ENCODE measurements at regions of chr18 and their contacts with region 1.

Region 1: GRCh38 chr18:3129053-3129864 is 90.5 kb downstream of the MYOM1 start:
- DNase-seq: peak; percentile 92
- ATAC-seq: peak; percentile 99
- H3K4me3 Mint-ChIP-seq: no peak overlapping the region
- H3K27ac Mint-ChIP-seq: peak overlapping the region; percentile 14
- H3K4me1 Mint-ChIP-seq: peaks cover 9% of the 10 kb centered on the region
- H3K27me3 Mint-ChIP-seq: no peaks in the 10 kb centered on the region
- CTCF ChIP-seq: peak; percentile 76

Region 2: DNA sequence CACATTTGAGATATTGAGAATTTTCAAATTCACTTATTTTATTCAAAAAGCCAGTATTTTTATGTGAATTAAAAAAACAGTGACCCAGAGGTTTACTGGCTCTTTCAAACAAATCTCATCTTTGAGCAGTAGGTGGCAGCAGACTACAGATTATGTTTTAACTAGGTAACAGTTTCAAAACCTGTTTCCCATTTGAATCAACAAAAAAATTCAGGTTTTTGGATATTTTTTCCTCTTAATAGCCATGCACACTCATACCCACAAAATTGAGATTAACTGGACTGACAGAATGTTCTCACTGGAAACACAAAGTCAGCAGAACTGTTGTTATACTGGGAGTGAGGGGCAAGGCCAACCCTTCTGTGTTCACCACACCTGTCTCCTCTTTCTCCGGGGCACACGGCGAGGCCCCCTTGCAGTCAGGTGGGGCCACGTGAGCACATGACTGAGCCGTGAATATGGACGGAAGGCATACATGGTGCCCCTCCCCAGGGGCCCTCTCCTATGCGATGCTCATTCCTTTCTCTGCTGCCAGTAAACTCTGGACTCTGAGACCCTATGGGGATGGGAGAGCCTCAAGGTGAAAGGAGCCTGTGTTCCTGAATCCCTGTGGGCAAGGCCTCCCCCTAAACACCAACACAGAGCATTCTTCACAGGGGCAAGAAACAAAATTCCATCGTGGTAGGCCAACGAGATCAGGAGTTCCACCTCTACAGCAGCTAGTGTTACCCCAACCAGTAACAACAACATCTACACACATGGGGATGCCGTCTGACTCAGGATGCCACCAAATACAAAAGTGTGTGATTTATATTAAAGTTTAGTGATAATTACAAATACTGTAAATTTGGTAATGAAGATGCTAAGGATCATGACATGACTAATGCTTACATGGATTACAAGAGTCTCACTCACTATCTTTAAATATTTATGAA is 196.7 kb before region 1 on chr18:
- CTCF ChIA-PET with region 1: interaction called, 17 read pairs
- POLR2A ChIA-PET with region 1: no interaction called
- intact Hi-C with region 1: no loop called
- DNase-seq: peak; percentile 56
- ATAC-seq: peak; percentile 71
- H3K4me3 Mint-ChIP-seq: no peak overlapping the region
- H3K27ac Mint-ChIP-seq: peak overlapping the region; percentile 79
- H3K4me1 Mint-ChIP-seq: peaks cover 43% of the 10 kb centered on the region
- H3K27me3 Mint-ChIP-seq: no peaks in the 10 kb centered on the region
- CTCF ChIP-seq: peak; percentile 88

Region 3: GRCh38 chr18:2985628-2986027 is 143.6 kb before region 1 on chr18:
- CTCF ChIA-PET with region 1: interaction called, 39 read pairs
- POLR2A ChIA-PET with region 1: no interaction called
- intact Hi-C with region 1: loop called (anchors 5 kb)
- DNase-seq: peak; percentile 32
- ATAC-seq: peak; percentile 53
- H3K4me3 Mint-ChIP-seq: no peak overlapping the region
- H3K27ac Mint-ChIP-seq: peak overlapping the region; percentile 34
- H3K4me1 Mint-ChIP-seq: peaks cover 72% of the 10 kb centered on the region
- H3K27me3 Mint-ChIP-seq: no peaks in the 10 kb centered on the region
- CTCF ChIP-seq: peak; percentile 74

Region 4: DNA sequence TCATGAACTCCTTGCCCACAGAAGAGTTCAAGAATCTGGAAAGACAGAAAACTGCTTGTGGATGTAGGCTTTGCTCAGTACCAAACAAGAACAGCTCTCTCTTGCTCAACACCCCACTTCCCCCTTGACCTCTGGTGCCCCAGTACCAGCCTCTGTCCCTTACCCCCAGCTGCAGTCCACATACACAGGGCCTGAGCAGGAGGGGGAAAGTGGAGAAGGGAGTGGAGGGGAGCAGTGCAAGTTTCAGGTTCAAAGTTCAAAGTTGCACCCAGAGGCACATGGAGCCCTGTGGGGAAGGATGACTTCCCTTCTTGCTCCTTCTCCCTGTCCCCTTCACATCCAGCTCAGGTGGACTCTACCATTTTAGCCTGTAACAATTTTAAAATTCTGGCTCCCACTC is 55.2 kb before region 1 on chr18:
- CTCF ChIA-PET with region 1: interaction called, 17 read pairs
- POLR2A ChIA-PET with region 1: no interaction called
- intact Hi-C with region 1: no loop called
- DNase-seq: no peak
- ATAC-seq: no peak
- H3K4me3 Mint-ChIP-seq: no peak overlapping the region
- H3K27ac Mint-ChIP-seq: no peak overlapping the region
- H3K4me1 Mint-ChIP-seq: peaks cover 21% of the 10 kb centered on the region
- H3K27me3 Mint-ChIP-seq: no peaks in the 10 kb centered on the region
- CTCF ChIP-seq: no peak

Region 5: DNA sequence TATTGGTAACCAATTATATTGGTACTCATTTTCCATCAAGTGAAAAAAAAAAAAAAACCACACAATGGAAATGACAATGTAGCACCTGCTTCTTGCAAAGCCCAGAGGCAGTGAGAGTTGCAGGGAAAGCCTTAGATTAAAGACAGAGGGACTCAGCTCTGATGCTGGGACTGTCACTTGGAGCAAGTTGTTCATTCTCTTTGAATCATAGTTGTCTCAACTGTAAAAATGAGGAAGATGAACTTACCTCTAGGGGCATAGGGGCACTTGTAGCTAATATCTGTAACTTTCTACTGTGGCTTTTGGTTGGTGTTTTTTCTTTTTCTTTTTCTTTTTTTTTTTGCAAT is 34.9 kb before region 1 on chr18:
- CTCF ChIA-PET with region 1: interaction called, 16 read pairs
- POLR2A ChIA-PET with region 1: no interaction called
- intact Hi-C with region 1: no loop called
- DNase-seq: no peak
- ATAC-seq: no peak
- H3K4me3 Mint-ChIP-seq: no peak overlapping the region
- H3K27ac Mint-ChIP-seq: no peak overlapping the region
- H3K4me1 Mint-ChIP-seq: peaks cover 21% of the 10 kb centered on the region
- H3K27me3 Mint-ChIP-seq: no peaks in the 10 kb centered on the region
- CTCF ChIP-seq: no peak

Region 6: GRCh38 chr18:3140986-3141639 is 11.9 kb after region 1 on chr18:
- CTCF ChIA-PET with region 1: interaction called, 47 read pairs
- POLR2A ChIA-PET with region 1: interaction called, 3 read pairs
- intact Hi-C with region 1: no loop called
- DNase-seq: no peak
- ATAC-seq: no peak
- H3K4me3 Mint-ChIP-seq: no peak overlapping the region
- H3K27ac Mint-ChIP-seq: no peak overlapping the region
- H3K4me1 Mint-ChIP-seq: no peaks in the 10 kb centered on the region
- H3K27me3 Mint-ChIP-seq: no peaks in the 10 kb centered on the region
- CTCF ChIP-seq: no peak

Region 7: DNA sequence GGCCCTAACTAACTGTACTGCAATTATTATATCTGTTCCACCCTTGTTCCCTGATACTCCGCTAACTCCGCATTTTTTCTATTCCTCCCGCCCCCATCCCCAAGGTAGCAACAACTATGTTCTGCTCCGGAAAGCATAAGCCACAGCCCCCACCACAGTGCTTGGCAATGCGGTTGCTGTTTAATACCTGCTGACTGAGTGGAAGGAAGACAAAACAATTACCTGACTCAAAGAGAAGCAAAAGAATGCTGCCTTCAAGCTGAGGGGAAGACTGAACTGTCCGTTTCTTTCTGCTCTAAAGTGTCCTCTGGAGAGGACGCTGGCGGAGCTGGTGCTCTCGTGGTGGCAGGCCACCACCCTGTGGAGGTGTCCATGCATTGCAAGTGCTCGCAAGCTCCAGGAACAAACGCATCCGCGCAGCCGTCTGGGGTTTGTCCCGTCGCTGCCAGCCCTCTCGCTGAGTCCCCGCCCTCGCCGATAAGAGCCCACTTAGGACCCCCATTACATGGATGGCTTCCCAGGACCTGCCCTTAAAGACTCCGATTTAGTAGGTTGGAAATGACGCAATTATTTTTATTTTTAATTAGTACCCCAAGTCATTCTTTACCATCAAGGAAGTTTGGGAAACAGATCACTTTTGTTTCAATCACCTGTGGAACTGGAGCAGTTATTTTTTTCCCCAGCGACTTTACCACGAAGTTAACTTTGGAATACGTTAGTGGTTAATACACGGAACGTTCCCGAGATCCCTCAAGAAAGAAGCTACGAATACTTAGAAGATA is 116.8 kb after region 1 on chr18:
- CTCF ChIA-PET with region 1: interaction called, 31 read pairs
- POLR2A ChIA-PET with region 1: no interaction called
- intact Hi-C with region 1: no loop called
- DNase-seq: peak; percentile 92
- ATAC-seq: peak; percentile 70
- H3K4me3 Mint-ChIP-seq: peak overlapping the region; percentile 94
- H3K27ac Mint-ChIP-seq: peak overlapping the region; percentile 98
- H3K4me1 Mint-ChIP-seq: peaks cover 29% of the 10 kb centered on the region
- H3K27me3 Mint-ChIP-seq: no peaks in the 10 kb centered on the region
- CTCF ChIP-seq: peak; percentile 96

Measured in activated CD8-positive, alpha-beta T cell treated with anti-CD3 and anti-CD28 coated beads for 36 hours (primary cell).